ENCODE measurements at regions of chr15 and their contacts with region 1.

Region 1: DNA sequence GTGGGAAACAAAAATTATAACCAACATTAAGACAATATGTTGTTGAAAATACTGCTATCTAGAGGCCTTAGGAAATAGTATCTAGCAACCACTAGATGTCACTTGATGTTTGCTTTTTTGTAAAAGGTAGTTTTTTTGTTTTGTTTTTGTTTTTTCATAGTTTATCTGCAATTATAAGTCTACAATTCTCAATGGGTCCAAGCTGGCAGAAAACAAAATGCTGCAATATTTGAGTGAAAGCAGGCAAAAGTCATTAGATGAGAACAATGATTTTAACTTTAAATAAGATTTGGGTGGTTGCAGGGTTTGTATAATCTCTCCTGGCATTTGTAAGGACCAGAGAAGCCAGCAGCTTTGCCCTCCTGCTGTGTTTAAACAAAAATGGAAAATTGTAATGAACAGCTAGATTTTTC is 27.0 kb downstream of the DUT start:
- DNase-seq: peak; percentile 21
- ATAC-seq: peak; percentile 54; the same call in 1 of the 2 replicates
- H3K4me3 ChIP-seq: no peak overlapping the region
- H3K27ac ChIP-seq: no peak overlapping the region
- H3K4me1 ChIP-seq: peaks cover 3 to 4% of the 10 kb centered on the region in 2 experiments; a peak in 3 of 4 replicates
- H3K27me3 ChIP-seq: no peaks in the 10 kb centered on the region
- CTCF ChIP-seq: peak; percentile 60 to 71 (median 66); a peak in 5 of 6 replicates
- POLR2A ChIP-seq: no peak
- RAD21 ChIP-seq: peak; percentile 73

Region 2: GRCh38 chr15:48225786-48226502 is 132.3 kb before region 1 on chr15:
- CTCF ChIA-PET with region 1: no interaction called
- POLR2A ChIA-PET with region 1: no interaction called
- RAD21 ChIA-PET with region 1: no interaction called
- intact Hi-C with region 1: no loop called
- DNase-seq: no peak
- ATAC-seq: no peak
- H3K4me3 ChIP-seq: no peak overlapping the region
- H3K27ac ChIP-seq: no peak overlapping the region
- H3K4me1 ChIP-seq: no peaks in the 10 kb centered on the region
- H3K27me3 ChIP-seq: peaks cover 35% of the 10 kb centered on the region
- CTCF ChIP-seq: no peak
- POLR2A ChIP-seq: no peak
- RAD21 ChIP-seq: no peak

Region 3: GRCh38 chr15:48520376-48521155 is 162.3 kb after region 1 on chr15:
- CTCF ChIA-PET with region 1: interaction called, 11 read pairs
- POLR2A ChIA-PET with region 1: no interaction called
- RAD21 ChIA-PET with region 1: no interaction called
- intact Hi-C with region 1: loop called (anchors 1 kb)
- DNase-seq: peak; percentile 7
- ATAC-seq: peak; percentile 89
- H3K4me3 ChIP-seq: no peak overlapping the region
- H3K27ac ChIP-seq: no peak overlapping the region
- H3K4me1 ChIP-seq: no peaks in the 10 kb centered on the region
- H3K27me3 ChIP-seq: no peaks in the 10 kb centered on the region
- CTCF ChIP-seq: peak; percentile 21 to 56 (median 32); a peak in 4 of 6 replicates
- POLR2A ChIP-seq: no peak
- RAD21 ChIP-seq: peak; percentile 64

Region 4: GRCh38 chr15:48800811-48801455 is 442.7 kb after region 1 on chr15:
- CTCF ChIA-PET with region 1: interaction called, 21 read pairs
- POLR2A ChIA-PET with region 1: no interaction called
- RAD21 ChIA-PET with region 1: no interaction called
- intact Hi-C with region 1: loop called (anchors 1 kb)
- DNase-seq: no peak
- ATAC-seq: no peak
- H3K4me3 ChIP-seq: no peak overlapping the region
- H3K27ac ChIP-seq: no peak overlapping the region
- H3K4me1 ChIP-seq: no peaks in the 10 kb centered on the region
- H3K27me3 ChIP-seq: no peaks in the 10 kb centered on the region
- CTCF ChIP-seq: peak; percentile 28 to 56 (median 31); a peak in 4 of 6 replicates
- POLR2A ChIP-seq: no peak
- RAD21 ChIP-seq: peak; percentile 46

Region 5: DNA sequence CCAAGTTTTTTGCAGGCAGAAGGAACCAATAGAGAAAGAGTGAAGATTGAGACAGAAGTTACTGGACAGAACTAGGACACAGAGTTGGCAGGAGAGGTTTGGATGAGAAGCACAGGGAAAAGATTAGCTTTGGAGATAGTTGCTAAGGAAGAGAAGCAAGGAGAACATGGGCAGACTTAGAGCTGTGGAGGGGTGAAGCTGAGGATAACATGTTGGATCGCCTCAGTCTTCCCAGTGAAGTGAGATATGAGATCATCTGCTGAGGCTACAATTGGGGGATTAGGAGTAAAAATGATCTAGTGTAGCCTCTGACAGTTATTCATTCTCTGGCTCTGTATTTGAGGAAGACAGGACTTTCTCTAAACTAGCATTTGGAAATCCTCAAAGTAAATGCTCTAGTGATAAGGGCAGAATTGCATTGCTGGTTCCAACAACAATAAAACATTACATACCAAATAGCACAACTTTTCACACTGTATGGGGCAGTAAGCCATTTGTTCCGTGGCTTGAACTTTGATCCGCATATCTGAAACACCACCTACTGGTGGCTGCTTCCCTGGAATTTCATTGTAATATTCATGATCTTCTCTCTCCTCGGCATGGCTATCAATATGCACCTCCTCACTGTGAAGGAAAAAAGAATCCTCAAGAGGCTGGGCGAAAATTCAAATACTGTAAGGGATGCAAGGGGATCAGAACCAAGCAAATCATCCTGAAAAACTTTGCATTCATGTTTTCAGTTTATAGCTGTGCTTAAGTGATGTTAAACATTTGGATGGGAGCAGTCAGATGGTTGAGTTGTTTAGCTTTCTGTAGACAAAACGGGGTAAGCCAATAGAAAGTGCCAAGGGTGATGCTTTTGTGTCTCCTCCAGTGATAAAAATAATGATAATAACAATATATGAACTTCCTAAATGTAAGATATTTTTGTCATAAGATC is 497.5 kb after region 1 on chr15:
- CTCF ChIA-PET with region 1: interaction called, 11 read pairs
- POLR2A ChIA-PET with region 1: no interaction called
- RAD21 ChIA-PET with region 1: no interaction called
- intact Hi-C with region 1: loop called (anchors 1 kb)
- DNase-seq: peak; percentile 19
- ATAC-seq: peak; percentile 96
- H3K4me3 ChIP-seq: no peak overlapping the region; a peak in 1 of 4 replicates
- H3K27ac ChIP-seq: no peak overlapping the region
- H3K4me1 ChIP-seq: peaks cover 8 to 12% of the 10 kb centered on the region in 2 experiments; a peak in 3 of 4 replicates
- H3K27me3 ChIP-seq: no peaks in the 10 kb centered on the region
- CTCF ChIP-seq: peak; percentile 41 to 63 (median 62); a peak in 5 of 6 replicates
- POLR2A ChIP-seq: no peak
- RAD21 ChIP-seq: peak; percentile 60

Region 6: DNA sequence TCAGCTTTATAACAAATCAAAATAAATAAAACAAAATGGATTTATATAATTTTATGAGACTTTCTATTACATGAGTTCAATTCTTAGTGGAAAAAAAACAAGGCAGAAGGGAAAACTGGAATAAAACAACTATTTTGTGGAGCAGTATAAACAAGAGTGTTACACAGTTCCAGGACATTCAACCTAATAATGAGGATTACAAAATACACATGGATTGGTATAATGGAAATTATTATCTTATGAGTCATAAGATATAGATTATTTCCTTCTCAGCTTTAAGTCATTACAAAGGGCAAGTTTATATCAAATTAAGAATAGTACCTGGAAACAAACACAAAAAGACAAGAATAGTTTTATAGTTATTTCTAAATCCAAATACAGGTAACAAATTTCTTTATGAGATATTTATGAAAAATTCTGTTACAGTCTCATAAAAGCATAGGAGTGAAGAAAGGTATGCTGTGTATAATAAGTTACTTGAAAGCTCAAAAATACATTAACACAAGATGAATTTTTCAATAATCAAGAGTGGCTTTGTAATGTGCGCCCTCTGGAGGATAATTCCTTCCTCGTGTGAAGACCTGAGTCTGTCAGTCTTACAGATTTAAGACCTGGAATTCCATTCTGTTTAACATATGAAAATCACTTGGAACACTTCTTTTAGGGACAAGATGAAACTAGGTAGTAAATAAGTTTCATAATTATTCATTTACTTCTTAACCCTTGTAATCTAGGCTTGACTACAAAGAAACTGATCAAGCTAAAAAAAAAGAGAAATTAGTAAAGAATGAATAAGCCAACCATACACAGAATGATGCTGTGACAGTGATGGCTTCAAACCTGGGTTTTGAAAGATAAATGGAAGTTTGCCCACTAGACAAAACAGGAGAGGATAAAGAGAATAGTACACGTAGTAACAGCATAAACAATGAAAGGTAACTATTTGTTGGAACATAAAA is 787.7 kb after region 1 on chr15:
- CTCF ChIA-PET with region 1: interaction called, 3 read pairs
- POLR2A ChIA-PET with region 1: no interaction called
- RAD21 ChIA-PET with region 1: no interaction called
- intact Hi-C with region 1: loop called (anchors 5 kb)
- DNase-seq: peak; percentile 35
- ATAC-seq: peak; percentile 64
- H3K4me3 ChIP-seq: no peak overlapping the region
- H3K27ac ChIP-seq: no peak overlapping the region
- H3K4me1 ChIP-seq: no peaks in the 10 kb centered on the region
- H3K27me3 ChIP-seq: no peaks in the 10 kb centered on the region
- CTCF ChIP-seq: peak; percentile 37 to 81 (median 65); a peak in 5 of 6 replicates
- POLR2A ChIP-seq: no peak
- RAD21 ChIP-seq: peak; percentile 56

Region 7: GRCh38 chr15:50145451-50145872 is 1787.2 kb after region 1 on chr15:
- CTCF ChIA-PET with region 1: interaction called, 13 read pairs
- POLR2A ChIA-PET with region 1: no interaction called
- RAD21 ChIA-PET with region 1: no interaction called
- intact Hi-C with region 1: loop called (anchors 2 kb)
- DNase-seq: peak; percentile 71
- ATAC-seq: peak; percentile 81
- H3K4me3 ChIP-seq: no peak overlapping the region
- H3K27ac ChIP-seq: no peak overlapping the region
- H3K4me1 ChIP-seq: peaks cover 2 to 23% of the 10 kb centered on the region in 2 experiments; a peak in 3 of 4 replicates
- H3K27me3 ChIP-seq: no peaks in the 10 kb centered on the region
- CTCF ChIP-seq: peak; percentile 17 to 61 (median 51); a peak in 3 of 6 replicates
- POLR2A ChIP-seq: no peak
- RAD21 ChIP-seq: peak; percentile 75